Sigmoid colon (tissue), 7 donors: ENCODE measurements at regions of chr11 and their contacts with region 1.

Region 1: DNA sequence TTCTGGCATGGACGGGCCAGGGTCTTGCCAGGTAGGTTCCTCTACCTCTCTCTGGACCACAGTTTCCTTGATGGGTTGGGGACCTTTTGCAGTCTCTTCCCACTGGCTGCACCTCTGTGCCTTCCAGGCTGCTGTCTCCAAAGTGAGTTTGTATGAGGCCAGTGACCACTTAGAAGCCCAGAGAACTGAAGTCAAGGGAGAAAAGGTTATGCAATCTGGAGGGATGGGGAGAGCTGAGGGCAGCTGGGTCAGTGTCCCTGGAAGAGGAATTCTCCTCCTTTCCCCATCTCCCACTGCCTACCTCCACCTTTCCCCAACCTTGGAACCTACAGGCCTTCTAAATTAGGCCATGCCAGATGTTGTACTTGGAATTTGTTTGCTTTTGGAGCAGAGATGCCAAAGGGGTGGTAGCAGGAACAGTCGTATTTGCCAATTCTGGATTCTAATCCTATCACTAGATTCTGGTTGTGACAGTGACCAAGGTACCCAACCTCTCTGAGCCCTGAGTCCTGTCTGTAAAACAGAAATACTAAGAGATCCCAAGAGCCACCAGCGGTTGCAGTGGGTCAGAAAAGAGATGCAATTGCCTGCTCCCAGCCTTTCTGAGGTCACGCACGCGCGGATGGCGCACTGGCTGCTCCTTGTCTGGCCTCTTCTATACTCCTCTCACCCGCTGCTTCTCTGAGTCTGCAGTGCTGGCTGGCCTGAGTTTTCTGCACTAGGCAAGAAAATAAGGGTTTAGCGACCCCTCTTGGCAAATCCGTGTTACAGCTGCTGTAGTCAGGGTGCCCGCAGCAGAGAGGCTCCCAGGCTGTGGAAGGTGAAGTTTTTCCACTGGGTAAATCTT is 10.7 kb upstream of the ACCSL start:
- DNase-seq: peak; percentile 93
- H3K4me3 ChIP-seq: no peak overlapping the region
- H3K27ac ChIP-seq: peak overlapping the region in 2 of 4 donors; percentile 21 to 47
- H3K4me1 ChIP-seq: peaks cover 0 to 19% (median 12%) of the 10 kb centered on the region in 4 donors
- H3K27me3 ChIP-seq: no peaks in the 10 kb centered on the region
- CTCF ChIP-seq: peak; percentile 42 to 69 (median 60)
- EP300 ChIP-seq: no peak
- POLR2A ChIP-seq: no peak

Region 2: GRCh38 chr11:43825217-43825816 is 211.7 kb before region 1 on chr11:
- intact Hi-C with region 1: loop called (anchors 5 kb)
- DNase-seq: no peak
- H3K4me3 ChIP-seq: no peak overlapping the region
- H3K27ac ChIP-seq: no peak overlapping the region
- H3K4me1 ChIP-seq: no peaks in the 10 kb centered on the region
- H3K27me3 ChIP-seq: no peaks in the 10 kb centered on the region
- CTCF ChIP-seq: peak in 1 of 4 experiments; percentile 36
- EP300 ChIP-seq: no peak
- POLR2A ChIP-seq: no peak

Region 3: DNA sequence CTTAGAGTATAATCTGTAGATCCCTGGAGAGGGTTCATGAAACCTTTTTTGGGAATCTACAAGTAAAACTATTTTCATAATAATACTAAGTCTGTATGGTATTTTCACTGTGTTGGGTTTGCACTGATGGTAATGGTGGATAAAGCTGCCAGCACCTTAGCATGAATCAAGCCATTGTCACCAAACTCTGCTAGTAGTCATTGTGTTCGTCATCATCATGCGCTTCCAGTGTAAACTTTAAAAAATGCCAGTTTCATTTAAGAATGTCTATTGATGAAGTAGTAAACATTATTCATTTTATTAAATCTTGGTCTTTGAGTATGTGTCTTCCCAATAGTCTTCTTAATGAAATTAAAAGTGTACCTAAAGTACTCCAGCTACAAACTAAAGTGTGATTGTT is 141.4 kb before region 1 on chr11:
- intact Hi-C with region 1: loop called (anchors 1 kb)
- DNase-seq: no peak
- H3K4me3 ChIP-seq: no peak overlapping the region
- H3K27ac ChIP-seq: no peak overlapping the region
- H3K4me1 ChIP-seq: no peaks in the 10 kb centered on the region
- H3K27me3 ChIP-seq: no peaks in the 10 kb centered on the region
- CTCF ChIP-seq: no peak
- EP300 ChIP-seq: no peak
- POLR2A ChIP-seq: no peak